HepG2 (cell line): ENCODE measurements at regions of chr1 and their contacts with region 1.

Region 1: DNA sequence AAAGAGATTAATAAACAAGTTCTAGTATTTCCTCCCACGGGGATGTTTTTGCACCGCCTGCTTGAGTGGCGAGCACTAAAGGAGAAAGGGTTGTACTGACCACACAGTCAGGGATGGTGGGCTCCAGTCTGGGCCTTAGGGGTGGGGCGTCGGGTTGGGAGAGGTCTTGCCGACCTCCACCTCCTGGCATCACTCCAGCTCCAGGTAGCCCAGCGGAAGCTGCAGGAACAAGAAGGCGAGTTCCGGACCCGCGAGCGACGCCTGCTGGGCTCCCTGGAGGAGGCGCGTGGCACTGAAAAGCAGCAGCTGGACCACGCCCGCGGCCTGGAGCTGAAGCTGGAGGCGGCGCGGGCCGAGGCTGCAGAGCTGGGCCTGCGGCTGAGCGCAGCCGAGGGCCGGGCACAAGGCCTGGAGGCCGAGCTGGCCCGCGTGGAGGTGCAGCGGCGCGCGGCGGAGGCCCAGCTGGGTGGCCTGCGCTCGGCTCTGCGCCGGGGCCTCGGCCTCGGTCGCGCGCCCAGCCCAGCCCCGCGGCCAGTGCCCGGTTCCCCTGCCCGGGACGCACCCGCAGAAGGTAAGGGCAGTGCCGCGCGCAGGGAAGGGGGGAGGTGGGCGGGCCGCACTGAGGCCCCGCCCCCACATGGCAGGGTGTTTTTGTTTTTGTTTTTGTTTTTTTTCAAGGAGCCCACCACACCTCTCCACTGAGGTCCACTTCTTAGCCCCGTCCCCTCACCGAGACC is 19.7 kb downstream of the MFAP2 start:
- DNase-seq: peak; percentile 59
- ATAC-seq: peak; percentile 77
- H3K4me3 ChIP-seq: peak overlapping the region; percentile 32 to 61 (median 47); a peak in 5 of 6 replicates
- H3K27ac ChIP-seq: no peak overlapping the region
- H3K4me1 ChIP-seq: peaks cover 23% of the 10 kb centered on the region
- H3K27me3 ChIP-seq: peaks cover 0 to 1% of the 10 kb centered on the region in 2 experiments; a peak in 1 of 5 replicates
- CTCF ChIP-seq: peak; percentile 78
- EP300 ChIP-seq: no peak
- POLR2A ChIP-seq: 0 out of 4 replicates have a peak, but pooled peaks of 1 of the 2 experiments have one; percentile 28
- RAD21 ChIP-seq: no peak; the same call in 1 of the 2 replicates

Region 2: GRCh38 chr1:17045634-17046333 is 85.1 kb after region 1 on chr1:
- CTCF ChIA-PET with region 1: interaction called, 11 read pairs
- POLR2A ChIA-PET with region 1: no interaction called
- in situ Hi-C with region 1: loop called (anchors 5 kb)
- intact Hi-C with region 1: no loop called
- DNase-seq: peak; percentile 63
- ATAC-seq: no peak
- H3K4me3 ChIP-seq: no peak overlapping the region
- H3K27ac ChIP-seq: no peak overlapping the region
- H3K4me1 ChIP-seq: 0 out of 2 replicates have a peak, but pooled peaks cover 5% of the 10 kb centered on the region
- H3K27me3 ChIP-seq: no peaks in the 10 kb centered on the region
- CTCF ChIP-seq: peak; percentile 73
- EP300 ChIP-seq: no peak
- POLR2A ChIP-seq: no peak
- RAD21 ChIP-seq: peak; percentile 26; the same call in 1 of the 2 replicates

Region 3: GRCh38 chr1:17236779-17237560 is 276.2 kb after region 1 on chr1:
- CTCF ChIA-PET with region 1: no interaction called
- POLR2A ChIA-PET with region 1: no interaction called
- in situ Hi-C with region 1: loop called (anchors 25 kb)
- intact Hi-C with region 1: no loop called
- DNase-seq: peak; percentile 73
- ATAC-seq: peak; percentile 90
- H3K4me3 ChIP-seq: no peak overlapping the region; a peak in 1 of 6 replicates
- H3K27ac ChIP-seq: no peak overlapping the region
- H3K4me1 ChIP-seq: peaks cover 7% of the 10 kb centered on the region; the same call in 1 of the 2 replicates
- H3K27me3 ChIP-seq: peaks cover 1 to 14% of the 10 kb centered on the region in 2 experiments; a peak in 2 of 5 replicates
- CTCF ChIP-seq: peak; percentile 97
- EP300 ChIP-seq: no peak
- POLR2A ChIP-seq: no peak
- RAD21 ChIP-seq: peak; percentile 77